ENCODE measurements at regions of chr9 and their contacts with region 1.

Region 1: DNA sequence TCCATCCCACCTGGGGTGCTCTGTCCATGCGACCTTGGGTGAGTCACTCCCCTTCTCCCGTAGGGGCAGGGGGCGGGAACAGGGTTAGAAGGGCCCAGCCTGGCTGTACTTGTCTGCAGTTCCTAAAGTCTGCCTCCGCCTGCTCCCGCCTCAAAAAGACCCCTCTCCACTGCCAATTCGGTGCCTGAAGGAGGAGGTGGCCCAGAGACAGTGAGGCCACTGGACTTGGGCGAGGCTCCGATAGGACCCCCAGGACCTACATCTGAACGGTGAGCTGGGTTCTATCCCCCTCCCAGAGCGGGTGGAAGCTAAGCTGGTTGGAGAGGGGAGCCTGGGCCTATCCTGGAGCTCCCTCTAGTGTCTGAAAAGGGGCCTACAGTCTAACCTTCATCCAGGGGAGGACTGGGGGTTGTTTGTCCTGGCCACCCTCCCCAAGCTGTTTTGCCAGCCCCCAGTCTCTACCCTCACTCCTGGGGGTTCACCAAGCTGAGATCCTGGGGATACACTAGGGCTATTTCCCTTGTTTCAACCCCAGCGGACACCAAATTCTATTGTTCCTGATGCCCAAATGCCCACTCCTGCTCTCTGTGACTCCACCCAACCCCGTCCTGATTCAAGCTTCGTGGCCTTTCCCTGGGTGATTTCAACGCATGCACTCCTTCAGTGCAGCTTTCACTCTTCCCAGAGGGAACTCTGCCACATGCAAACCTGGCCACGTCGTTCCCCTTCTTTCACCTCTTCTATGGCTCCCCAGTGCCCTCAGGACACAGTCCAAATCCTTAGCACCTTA is 6.1 kb upstream of the CRB2 start:
- DNase-seq: peak; percentile 88
- CTCF ChIP-seq: peak; percentile 89

Region 2: DNA sequence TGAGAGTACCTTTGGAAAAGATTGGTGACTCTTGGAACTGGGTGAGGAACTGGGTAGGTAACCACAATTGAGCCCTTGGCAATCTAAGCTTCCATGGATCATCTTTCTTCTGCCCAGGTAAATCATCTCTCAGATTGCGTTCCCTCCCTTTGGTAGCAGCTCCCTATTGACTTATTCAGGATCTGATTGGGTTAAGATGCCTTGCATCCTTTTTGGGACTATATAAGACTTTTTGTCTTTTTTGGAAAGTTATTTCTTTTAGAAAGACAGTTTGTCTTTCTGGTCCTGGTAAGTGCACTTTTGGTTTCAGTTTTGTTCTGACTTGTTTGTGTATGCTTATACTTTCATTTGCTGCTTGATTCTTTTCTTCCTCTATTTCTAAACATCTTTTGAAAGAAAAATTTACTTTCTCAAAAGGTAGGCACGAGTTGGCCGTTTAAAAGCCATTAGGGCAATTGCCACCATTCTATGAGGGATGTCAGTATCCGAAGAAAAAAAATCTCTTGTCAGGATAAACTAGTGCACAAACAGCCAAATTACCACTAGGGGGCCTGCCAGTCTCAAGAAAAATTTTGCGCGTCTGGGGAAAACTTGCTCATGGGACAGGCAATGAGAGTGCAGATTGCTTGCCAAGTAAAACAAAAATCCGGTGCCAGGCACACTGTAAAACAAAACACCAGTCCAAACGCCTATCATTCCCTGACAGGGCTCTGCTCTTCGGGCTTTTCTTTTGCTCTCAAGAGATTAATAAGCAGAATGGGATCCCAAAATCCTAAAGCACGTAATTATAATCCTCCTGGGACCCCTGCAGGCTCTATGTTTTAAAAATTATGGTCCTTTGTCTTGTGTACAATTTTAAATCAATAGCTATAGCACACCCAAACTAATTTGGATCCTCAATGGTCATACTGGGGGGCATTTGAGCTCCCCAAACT is 885.0 kb before region 1 on chr9:
- in situ Hi-C with region 1: loop called (anchors 25 kb)
- DNase-seq: peak; percentile 62
- CTCF ChIP-seq: peak; percentile 76

Region 3: GRCh38 chr9:123081824-123082223 is 268.1 kb before region 1 on chr9:
- in situ Hi-C with region 1: loop called (anchors 5 kb)
- DNase-seq: no peak
- CTCF ChIP-seq: peak; percentile 70

Region 4: DNA sequence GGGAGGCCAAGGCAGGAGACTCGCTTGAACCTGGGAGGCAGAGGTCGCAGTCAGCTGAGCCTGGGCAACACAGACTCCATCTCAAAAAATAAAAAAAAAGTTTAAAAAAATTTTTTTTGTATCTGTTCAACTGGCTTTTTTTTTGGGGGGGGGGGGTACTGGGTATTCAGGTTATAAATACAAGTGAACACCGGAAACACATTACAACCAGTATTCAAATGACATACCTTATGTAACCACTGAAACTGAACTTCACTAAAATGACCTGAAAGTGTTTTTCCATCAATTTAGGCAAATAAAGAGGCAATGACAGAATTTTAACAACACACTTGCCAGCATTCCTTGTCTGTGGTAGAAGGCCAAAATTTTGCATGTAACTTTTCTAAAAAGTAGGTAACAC is 115.0 kb before region 1 on chr9:
- in situ Hi-C with region 1: loop called (anchors 10 kb)
- DNase-seq: peak; percentile 48
- CTCF ChIP-seq: no peak

Region 5: DNA sequence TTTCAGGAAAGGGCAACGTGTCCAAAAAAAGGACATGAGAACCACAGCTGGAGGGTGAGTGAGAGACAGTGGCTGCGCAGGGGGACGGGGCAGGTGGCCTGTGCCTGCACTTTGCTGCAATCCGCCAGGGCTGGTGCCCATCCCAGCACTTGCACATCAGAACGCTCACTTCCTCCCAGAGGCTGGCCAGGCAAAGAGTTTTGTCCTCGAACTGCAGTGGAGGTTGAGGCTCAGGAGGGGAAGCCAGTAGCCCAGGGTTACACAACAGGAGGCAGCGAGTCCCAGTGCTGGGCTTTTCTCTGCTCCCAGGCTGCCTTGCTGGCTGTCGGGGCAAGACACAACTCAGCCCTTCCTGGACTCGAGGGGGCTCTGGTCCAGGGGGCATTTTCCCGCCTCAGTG is 39.2 kb after region 1 on chr9:
- in situ Hi-C with region 1: loop called (anchors 5 kb)
- DNase-seq: no peak
- CTCF ChIP-seq: no peak